Activated B cell treated with CpG ODN at 0.5 μM for 24 hours (primary cell): ENCODE measurements at regions of chr15 and their contacts with region 1.

Region 1: DNA sequence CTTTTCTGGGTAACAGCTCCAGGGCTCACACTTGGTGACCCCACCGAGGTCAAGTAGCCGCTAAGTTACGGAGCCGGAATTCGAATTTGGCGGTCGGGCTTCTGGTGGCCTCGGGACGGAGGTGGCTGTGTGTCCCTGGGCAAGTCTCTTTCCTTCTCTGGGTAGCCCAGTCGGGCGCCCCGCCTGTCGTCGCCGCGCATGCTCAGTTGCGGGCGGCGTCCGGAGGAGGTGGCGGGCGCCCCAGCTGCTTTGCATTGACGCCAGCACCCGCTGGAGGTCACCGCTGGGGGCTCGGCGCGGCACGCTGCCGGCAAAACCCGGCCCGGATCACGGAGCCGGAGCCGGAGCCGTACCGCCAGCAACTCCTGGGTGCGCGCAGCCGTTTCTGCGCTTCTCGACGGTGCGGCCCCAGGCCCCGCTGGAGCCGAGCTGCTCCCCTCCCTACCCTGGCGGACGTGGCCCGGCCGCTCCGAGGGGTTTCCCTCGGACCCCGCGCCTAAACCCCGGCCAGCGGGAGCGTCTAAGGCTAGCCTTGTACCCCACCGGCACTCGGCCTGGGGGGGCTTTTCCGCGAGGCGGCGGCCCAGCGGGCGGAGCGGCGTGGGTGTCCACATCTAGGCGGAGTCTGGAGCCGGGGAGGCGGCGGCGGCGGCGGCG is 474 bp upstream of the PDE8A start:
- DNase-seq: peak; percentile 98
- ATAC-seq: peak; percentile 78
- H3K4me3 Mint-ChIP-seq: peak overlapping the region; percentile 94
- H3K27ac Mint-ChIP-seq: peak overlapping the region; percentile 93
- H3K4me1 Mint-ChIP-seq: peaks cover 39% of the 10 kb centered on the region
- H3K27me3 Mint-ChIP-seq: no peaks in the 10 kb centered on the region
- CTCF ChIP-seq: no peak

Region 2: DNA sequence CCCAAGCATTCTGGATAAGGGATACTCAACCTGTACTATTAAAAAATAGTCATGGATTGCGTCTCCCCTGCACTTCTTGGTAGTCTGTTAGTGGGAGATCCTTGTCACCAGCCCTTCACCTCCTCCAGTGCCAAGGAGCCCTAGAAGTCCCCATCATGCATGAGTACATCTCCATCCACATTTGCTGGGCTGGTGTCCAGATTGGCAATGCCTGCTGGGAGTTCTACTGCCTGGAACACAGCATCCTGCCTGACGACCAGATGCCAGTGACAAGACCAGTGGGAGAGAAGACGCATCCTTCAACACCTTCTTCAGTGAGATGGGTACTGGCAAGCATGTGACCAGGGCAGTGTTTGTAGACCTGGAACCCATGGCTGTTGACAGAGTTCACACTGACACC is 1241.6 kb before region 1 on chr15:
- CTCF ChIA-PET with region 1: no interaction called
- POLR2A ChIA-PET with region 1: no interaction called
- intact Hi-C with region 1: no loop called
- DNase-seq: no peak
- ATAC-seq: no peak
- H3K4me3 Mint-ChIP-seq: no peak overlapping the region
- H3K27ac Mint-ChIP-seq: no peak overlapping the region
- H3K4me1 Mint-ChIP-seq: no peaks in the 10 kb centered on the region
- H3K27me3 Mint-ChIP-seq: peaks cover 2% of the 10 kb centered on the region
- CTCF ChIP-seq: no peak

Region 3: DNA sequence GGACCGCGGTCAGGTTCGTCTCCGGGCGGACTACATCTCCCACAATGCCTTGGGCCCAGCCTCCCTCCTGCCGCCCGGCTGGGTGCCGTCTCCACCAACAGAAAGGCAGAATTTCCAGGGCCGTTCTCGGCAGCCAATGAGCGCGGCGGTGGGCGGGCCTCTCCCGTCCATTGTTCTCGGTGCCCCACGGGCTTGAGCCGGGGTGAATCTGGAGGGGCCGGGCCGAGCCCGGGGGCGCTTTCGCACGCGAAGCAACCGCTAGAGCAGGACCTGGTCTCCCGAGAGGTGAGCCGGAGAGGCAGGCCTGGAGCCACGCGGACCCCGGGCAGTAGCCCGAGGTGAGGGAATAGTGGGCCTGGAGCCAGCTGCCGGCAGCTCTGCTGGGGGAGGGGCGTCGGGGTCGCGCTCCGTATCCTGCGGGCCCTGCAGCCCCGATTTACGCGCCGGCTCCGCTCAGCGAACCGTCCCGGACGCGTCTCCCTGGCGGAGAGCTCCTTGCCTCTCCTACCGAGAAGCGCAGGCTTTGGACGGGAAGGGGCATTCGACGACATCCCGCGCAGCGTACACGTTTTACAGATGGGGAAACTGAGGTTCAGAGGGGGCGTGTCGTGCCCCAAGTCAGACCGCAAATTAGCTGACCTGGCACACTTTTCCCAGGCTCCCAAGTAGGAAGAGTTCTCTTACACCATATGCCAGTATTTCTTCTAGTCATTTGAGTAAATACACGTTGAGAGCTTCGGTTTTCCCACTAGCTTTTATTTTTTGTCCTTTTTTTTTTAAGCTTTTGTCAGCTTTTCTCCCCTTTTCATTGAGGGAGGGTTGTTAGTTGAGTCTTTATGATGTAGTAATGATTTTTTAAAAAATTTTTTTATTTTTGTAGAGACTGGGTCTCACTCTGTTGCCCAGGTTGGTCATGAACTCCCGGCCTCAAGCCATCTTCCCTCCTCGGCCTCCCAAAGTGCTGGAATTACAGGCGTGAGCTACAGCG is 380.0 kb before region 1 on chr15 and contains the start of gene ZSCAN2:
- CTCF ChIA-PET with region 1: no interaction called
- POLR2A ChIA-PET with region 1: interaction called, 4 read pairs
- intact Hi-C with region 1: loop called (anchors 1 kb)
- DNase-seq: peak; percentile 86
- ATAC-seq: peak; percentile 94
- H3K4me3 Mint-ChIP-seq: peak within 1 kb of the TSS; percentile 97
- H3K27ac Mint-ChIP-seq: peak within 1 kb of the TSS; percentile 88
- H3K4me1 Mint-ChIP-seq: peaks cover 73% of the 10 kb centered on the region
- H3K27me3 Mint-ChIP-seq: no peaks in the 10 kb centered on the region
- CTCF ChIP-seq: no peak
- total RNA-seq, gene ZSCAN2: 16.0 and 18.7 TPM in 2 replicates

Region 4: GRCh38 chr15:84716036-84716799 is 265.0 kb before region 1 on chr15 and contains the start of gene SEC11A:
- CTCF ChIA-PET with region 1: no interaction called
- POLR2A ChIA-PET with region 1: interaction called, 10 read pairs
- intact Hi-C with region 1: loop called (anchors 1 kb)
- DNase-seq: peak; percentile 96
- ATAC-seq: peak; percentile 95
- H3K4me3 Mint-ChIP-seq: peak within 1 kb of the TSS; percentile 93
- H3K27ac Mint-ChIP-seq: peak within 1 kb of the TSS; percentile 92
- H3K4me1 Mint-ChIP-seq: peaks cover 49% of the 10 kb centered on the region
- H3K27me3 Mint-ChIP-seq: no peaks in the 10 kb centered on the region
- CTCF ChIP-seq: no peak
- total RNA-seq, gene SEC11A: 68.9 and 71.2 TPM in 2 replicates

Region 5: GRCh38 chr15:85005319-85005718 is 24.1 kb after region 1 on chr15:
- CTCF ChIA-PET with region 1: interaction called, 4 read pairs
- POLR2A ChIA-PET with region 1: interaction called, 22 read pairs
- intact Hi-C with region 1: loop called (anchors 1 kb)
- DNase-seq: no peak
- ATAC-seq: no peak
- H3K4me3 Mint-ChIP-seq: no peak overlapping the region
- H3K27ac Mint-ChIP-seq: no peak overlapping the region
- H3K4me1 Mint-ChIP-seq: peaks cover 67% of the 10 kb centered on the region
- H3K27me3 Mint-ChIP-seq: no peaks in the 10 kb centered on the region
- CTCF ChIP-seq: no peak

Region 6: GRCh38 chr15:85044251-85044853 is 63.2 kb after region 1 on chr15:
- CTCF ChIA-PET with region 1: interaction called, 4 read pairs
- POLR2A ChIA-PET with region 1: interaction called, 6 read pairs
- intact Hi-C with region 1: loop called (anchors 1 kb)
- DNase-seq: no peak
- ATAC-seq: peak; percentile 56
- H3K4me3 Mint-ChIP-seq: no peak overlapping the region
- H3K27ac Mint-ChIP-seq: no peak overlapping the region
- H3K4me1 Mint-ChIP-seq: peaks cover 31% of the 10 kb centered on the region
- H3K27me3 Mint-ChIP-seq: no peaks in the 10 kb centered on the region
- CTCF ChIP-seq: no peak